ENCODE measurements at regions of chr6 and their contacts with region 1.

Region 1: DNA sequence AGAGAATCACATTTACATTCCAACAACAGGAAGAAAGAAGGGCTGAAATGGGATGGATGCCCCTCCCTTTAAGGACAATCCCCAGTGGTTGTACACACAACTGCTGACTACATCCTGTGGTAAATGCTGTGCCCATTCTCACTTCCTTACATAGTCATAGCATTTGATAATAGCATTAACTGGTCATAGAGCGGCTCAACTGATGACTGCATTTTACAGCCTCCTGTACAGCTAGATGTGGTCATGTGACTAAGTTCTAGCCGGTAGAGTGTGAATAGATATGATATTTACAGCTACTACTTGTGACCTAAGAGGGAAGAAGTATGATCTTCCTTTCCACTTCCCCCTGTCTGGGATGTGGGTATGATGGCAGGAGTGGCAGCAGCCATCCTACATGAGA is 24.7 kb downstream of the KCNK17 start:
- DNase-seq: no peak
- H3K4me3 ChIP-seq: no peak overlapping the region
- H3K27ac ChIP-seq: no peak overlapping the region
- H3K4me1 ChIP-seq: no peaks in the 10 kb centered on the region
- H3K27me3 ChIP-seq: peaks cover 2% of the 10 kb centered on the region
- CTCF ChIP-seq: no peak

Region 2: GRCh38 chr6:39189915-39190544 is 99.5 kb before region 1 on chr6:
- CTCF ChIA-PET with region 1: no interaction called
- dilution Hi-C with region 1: no loop called
- in situ Hi-C with region 1: no loop called
- intact Hi-C with region 1: no loop called
- DNase-seq: peak; percentile 26
- H3K4me3 ChIP-seq: no peak overlapping the region
- H3K27ac ChIP-seq: no peak overlapping the region
- H3K4me1 ChIP-seq: peaks cover 6% of the 10 kb centered on the region
- H3K27me3 ChIP-seq: no peaks in the 10 kb centered on the region
- CTCF ChIP-seq: peak; percentile 36 to 60

Region 3: GRCh38 chr6:39239527-39240154 is 49.8 kb before region 1 on chr6:
- CTCF ChIA-PET with region 1: no interaction called
- dilution Hi-C with region 1: loop called (anchors 5 kb)
- in situ Hi-C with region 1: no loop called
- intact Hi-C with region 1: no loop called
- DNase-seq: no peak
- H3K4me3 ChIP-seq: no peak overlapping the region
- H3K27ac ChIP-seq: no peak overlapping the region
- H3K4me1 ChIP-seq: peaks cover 5% of the 10 kb centered on the region
- H3K27me3 ChIP-seq: no peaks in the 10 kb centered on the region
- CTCF ChIP-seq: no peak

Region 4: GRCh38 chr6:39251406-39251805 is 38.1 kb before region 1 on chr6:
- CTCF ChIA-PET with region 1: no interaction called
- dilution Hi-C with region 1: no loop called
- in situ Hi-C with region 1: no loop called
- intact Hi-C with region 1: no loop called
- DNase-seq: no peak
- H3K4me3 ChIP-seq: no peak overlapping the region
- H3K27ac ChIP-seq: no peak overlapping the region
- H3K4me1 ChIP-seq: no peaks in the 10 kb centered on the region
- H3K27me3 ChIP-seq: no peaks in the 10 kb centered on the region
- CTCF ChIP-seq: no peak

Measured in mammary epithelial cell (primary cell).